ENCODE measurements at regions of chr4 and their contacts with region 1.

Region 1: DNA sequence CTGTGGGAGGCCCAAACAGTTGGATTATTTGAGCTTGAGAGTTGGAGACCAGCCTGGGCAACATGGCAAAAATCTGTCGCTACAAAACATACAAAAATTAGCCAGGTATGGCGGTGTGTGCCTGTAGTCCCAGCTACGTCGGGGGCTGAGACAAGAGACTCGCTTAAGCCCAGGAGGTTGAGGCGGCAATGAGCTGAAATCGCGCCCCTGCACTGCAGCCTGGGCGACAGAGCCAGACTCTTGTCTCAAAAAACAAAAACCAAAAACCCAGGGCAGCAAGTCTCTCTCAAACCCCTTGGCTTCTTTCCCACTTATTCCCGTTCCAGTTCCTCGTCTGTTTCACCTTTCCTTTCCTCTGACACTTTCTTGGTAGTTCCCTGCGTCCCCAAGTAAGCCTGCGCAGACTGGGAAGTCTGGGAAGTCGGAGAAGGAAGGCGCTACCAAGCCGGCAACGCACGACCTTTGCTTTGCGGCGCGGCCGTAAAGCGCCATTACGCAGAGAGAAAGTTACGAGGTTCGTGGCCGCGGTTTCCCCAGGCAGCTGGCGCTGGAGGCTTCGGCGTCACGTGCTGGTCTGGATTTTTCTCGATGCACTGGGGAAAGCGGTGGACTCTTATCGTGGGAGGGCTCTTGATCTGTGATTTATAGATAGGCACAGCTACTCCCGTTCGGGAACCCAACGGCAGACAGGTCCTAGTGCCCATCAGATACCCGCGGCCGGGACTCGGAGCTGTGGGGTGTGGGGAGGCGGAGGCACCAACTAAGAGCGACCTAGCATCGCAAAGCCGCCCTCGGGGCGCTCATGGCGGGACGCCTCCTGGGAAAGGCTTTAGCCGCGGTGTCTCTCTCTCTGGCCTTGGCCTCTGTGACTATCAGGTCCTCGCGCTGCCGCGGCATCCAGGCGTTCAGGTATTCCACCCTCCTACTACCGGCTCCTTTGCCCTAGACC is at the start of gene NUDT9:
- DNase-seq: peak; percentile 97 to 99
- ATAC-seq: peak; percentile 97
- H3K4me3 ChIP-seq: peak within 1 kb of the TSS; percentile 42 to 52
- H3K27ac ChIP-seq: peak within 1 kb of the TSS; percentile 29 to 90
- H3K4me1 ChIP-seq: peaks cover 1 to 3% of the 10 kb centered on the region in 2 donors
- H3K27me3 ChIP-seq: no peaks in the 10 kb centered on the region
- total RNA-seq, gene NUDT9: 22.2 to 29.1 TPM

Region 2: GRCh38 chr4:87375719-87376291 is 46.6 kb before region 1 on chr4:
- intact Hi-C with region 1: loop called in 1 of 2 experiments (anchors 5 kb)
- DNase-seq: no peak
- ATAC-seq: peak; percentile 88
- H3K4me3 ChIP-seq: no peak overlapping the region
- H3K27ac ChIP-seq: no peak overlapping the region
- H3K4me1 ChIP-seq: no peaks in the 10 kb centered on the region
- H3K27me3 ChIP-seq: no peaks in the 10 kb centered on the region

Region 3: DNA sequence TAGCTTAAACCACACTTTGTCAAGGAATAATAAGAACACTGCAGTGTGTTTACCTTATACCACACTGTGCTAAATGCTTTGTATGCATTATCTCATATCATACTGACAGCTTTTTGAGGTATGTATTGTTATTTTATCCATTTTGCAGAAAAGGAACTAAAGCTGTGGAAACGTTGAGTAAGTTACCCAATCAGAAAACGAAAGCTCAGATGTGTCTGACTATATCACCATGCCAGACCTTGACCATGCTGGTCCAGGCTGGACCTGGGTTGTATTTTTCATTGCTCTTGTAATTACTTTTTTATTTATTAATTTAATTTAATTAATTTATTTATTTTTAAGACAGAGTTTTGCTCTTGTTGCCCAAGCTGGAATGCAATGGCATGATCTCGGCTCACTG is 33.5 kb before region 1 on chr4:
- intact Hi-C with region 1: loop called in 1 of 2 experiments (anchors 5 kb)
- DNase-seq: no peak
- ATAC-seq: no peak
- H3K4me3 ChIP-seq: no peak overlapping the region
- H3K27ac ChIP-seq: no peak overlapping the region
- H3K4me1 ChIP-seq: no peaks in the 10 kb centered on the region
- H3K27me3 ChIP-seq: no peaks in the 10 kb centered on the region

Measured in aorta (tissue), 5 donors.